ENCODE measurements at regions of chr17 and their contacts with region 1.

Region 1: GRCh38 chr17:40019140-40019991 is 4.1 kb downstream of the CSF3 start:
- DNase-seq: peak; percentile 48
- ATAC-seq: peak in 1 of 2 donors; percentile 11

Region 2: DNA sequence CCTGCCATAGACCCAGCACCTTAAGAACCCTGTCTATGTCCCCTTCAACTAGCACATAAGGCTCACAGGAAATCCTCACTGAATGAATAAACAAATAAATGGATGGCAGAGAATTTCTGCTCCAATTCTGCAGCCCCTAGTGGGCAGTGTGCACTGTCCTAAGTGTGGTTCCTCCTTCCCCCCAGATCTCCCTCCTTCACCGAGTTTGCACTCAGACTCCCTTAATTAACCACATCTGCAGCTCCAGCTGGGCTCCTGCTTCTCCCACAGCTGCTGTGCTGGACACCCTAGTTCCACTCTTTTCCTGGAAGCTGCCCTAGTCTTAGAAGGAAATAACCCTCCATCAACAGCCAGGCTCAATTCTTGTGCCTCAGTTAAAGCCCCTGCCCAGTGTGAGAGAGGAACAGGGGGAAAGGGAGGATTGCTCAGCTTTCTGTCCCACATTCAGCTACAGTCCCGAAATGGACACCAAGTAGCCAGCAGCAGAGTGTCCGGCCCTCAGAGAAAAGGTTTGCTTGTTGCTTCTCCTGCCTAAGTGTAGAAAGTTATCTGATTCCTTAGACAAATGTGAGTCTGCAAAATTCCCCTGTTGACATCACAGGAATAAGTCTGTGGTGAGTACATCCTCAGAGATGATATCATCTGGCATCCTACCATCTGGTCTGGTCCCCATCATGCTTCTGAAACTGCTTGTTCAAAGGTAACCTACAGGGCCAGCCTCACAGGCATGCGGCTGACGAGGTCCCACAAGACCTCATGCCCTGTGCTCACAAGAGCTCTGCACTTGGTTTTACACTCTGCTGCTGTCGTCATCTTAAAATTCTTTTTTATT is 79.6 kb before region 1 on chr17:
- intact Hi-C with region 1: no loop called
- DNase-seq: no peak
- ATAC-seq: peak; percentile 54 to 79

Region 3: DNA sequence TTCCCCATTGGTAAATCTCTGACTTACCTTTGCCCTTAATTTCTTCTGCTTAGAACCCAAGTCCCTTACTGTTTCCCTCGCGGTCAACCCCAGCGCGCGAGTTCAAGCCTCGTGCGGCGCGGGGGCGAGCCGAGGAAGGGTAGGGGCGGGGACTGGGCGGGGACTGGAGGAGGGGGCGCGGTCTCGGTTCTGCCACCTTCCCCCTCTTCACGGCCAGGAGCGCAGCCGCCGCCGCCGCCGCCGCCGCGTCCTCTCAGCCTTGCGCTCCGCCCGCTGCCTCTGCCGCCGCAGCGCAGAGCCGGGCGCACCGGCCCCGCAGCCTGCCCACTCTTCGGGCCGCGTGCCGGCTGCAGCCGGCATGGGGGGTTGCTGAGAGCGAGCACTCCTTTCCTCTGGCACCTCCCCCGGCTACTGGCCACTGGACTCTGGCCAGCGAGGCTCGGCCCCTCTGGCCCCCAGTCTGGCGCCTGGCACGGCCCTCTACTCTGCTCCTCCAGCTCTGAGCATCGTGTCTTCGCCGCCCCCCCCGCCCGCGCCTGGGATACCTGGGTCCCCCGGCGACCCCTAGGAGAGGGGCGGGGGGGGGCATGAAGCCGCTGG is 158.0 kb after region 1 on chr17 and contains the start of gene RAPGEFL1:
- intact Hi-C with region 1: loop called in 1 of 2 experiments (anchors 5 kb)
- DNase-seq: peak; percentile 82
- ATAC-seq: peak; percentile 90 to 92
- total RNA-seq, gene RAPGEFL1: 2.8 to 4.6 TPM

Region 4: DNA sequence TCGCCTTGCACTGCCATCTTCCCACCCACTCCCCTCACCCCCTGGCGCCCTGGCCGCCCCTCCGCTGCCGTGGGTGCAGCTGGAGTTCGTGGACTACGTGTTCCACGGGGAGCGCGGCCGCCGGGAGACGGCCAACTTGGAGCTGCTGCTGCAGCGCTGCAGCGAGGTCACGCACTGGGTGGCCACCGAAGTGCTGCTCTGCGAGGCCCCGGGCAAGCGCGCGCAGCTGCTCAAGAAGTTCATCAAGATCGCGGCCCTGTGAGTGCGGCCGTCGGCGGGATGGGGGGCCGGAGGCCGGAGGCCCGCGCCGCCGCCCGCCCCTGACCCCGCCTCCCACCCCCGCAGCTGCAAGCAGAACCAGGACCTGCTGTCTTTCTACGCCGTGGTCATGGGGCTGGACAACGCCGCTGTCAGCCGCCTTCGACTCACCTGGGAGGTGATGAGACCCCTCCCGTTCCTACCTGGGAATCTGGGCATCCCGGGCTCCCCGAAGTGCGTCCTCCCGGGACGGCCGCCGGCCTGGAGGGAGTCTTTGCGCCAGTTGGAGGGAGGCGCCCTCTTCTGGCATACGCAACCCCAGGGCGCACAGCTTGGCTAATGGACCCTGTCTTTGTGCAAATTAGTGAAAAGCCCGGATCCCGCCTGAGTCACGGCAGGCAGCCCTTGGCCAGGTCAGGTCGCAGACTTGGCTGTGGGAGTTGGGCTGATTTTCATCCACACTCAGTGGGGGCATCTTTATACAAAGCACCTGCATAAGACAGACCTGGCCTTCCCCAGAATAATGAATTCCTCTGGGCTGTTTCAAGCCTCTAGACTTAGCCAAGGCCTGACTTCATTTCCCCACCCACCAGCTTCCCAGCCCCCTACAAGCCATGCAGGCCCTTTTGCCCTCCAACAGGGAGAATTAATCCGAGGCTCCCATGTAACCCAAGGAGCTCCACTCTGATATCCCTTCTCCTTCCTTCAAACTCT is 172.2 kb after region 1 on chr17:
- intact Hi-C with region 1: loop called (anchors 5 to 10 kb)
- DNase-seq: peak; percentile 80
- ATAC-seq: peak; percentile 89 to 90